ENCODE measurements at regions of chr2 and their contacts with region 1.

Region 1: DNA sequence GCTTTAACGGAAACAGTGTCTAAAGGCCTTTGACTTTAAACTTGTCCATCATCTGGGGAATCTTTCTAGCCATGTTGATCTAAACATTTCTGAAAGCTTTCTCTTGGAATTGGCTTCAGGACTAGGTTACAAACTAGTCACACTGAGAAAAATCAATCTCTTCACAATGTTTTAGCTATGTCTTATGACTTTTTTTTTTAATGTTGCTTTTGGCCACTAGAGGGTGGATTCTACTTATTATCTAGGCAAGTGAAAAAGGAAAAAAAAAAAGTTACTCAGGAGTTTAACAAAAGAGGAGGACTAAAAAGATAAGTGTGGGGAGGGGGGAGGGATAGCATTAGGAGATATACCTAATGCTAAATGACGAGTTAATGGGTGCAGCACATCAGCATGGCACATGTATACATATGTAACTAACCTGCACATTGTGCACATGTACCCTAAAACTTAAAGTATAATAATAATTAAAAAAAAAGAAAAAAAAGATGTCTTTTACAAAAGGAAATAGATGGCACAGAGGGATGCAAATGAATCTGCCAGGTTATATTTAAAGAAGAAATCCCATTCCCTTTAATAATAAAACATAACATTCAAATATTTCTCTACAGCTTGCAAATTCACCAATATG is 160.4 kb upstream of the PID1 start:
- DNase-seq: peak; percentile 78
- ATAC-seq: peak; percentile 40; the same call in 1 of the 2 replicates
- H3K4me3 ChIP-seq: no peak overlapping the region
- H3K27ac ChIP-seq: no peak overlapping the region
- H3K4me1 ChIP-seq: peaks cover 7% of the 10 kb centered on the region; the same call in 1 of the 2 replicates
- H3K27me3 ChIP-seq: no peaks in the 10 kb centered on the region
- CTCF ChIP-seq: peak; percentile 67

Region 2: DNA sequence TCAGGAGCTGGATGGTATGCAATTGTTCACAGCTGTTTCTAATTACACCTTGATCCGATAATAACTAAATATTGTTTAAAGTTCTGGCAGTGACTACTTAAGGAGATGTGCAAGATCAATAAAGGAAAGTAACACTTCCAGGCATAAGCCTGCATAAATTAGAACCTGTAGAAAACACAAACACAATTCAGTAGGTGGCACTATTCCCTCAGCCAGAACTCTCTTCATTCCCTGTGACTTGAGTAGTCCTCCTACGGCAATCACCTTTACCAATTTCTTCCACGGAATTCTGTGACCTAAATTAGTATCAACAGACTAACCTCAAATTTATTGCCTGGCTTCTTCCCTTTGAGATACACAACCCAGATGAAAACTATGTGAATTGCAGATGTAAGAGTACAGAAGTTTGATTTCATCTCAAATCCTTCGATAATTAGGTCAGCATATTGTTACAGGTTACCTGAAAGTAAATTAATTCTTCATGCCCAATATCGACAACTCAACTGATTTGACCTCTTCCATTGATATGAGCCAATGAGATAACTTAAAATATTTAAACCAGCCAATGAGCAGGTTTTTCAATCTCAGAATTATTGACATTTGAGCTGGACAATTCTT is 298.2 kb before region 1 on chr2:
- CTCF ChIA-PET with region 1: no interaction called
- POLR2A ChIA-PET with region 1: no interaction called
- intact Hi-C with region 1: loop called (anchors 1 kb)
- DNase-seq: peak; percentile 78
- ATAC-seq: peak; percentile 75
- H3K4me3 ChIP-seq: no peak overlapping the region
- H3K27ac ChIP-seq: no peak overlapping the region
- H3K4me1 ChIP-seq: no peaks in the 10 kb centered on the region
- H3K27me3 ChIP-seq: peaks cover 6% of the 10 kb centered on the region; the same call in 1 of the 2 replicates
- CTCF ChIP-seq: peak; percentile 84

Region 3: DNA sequence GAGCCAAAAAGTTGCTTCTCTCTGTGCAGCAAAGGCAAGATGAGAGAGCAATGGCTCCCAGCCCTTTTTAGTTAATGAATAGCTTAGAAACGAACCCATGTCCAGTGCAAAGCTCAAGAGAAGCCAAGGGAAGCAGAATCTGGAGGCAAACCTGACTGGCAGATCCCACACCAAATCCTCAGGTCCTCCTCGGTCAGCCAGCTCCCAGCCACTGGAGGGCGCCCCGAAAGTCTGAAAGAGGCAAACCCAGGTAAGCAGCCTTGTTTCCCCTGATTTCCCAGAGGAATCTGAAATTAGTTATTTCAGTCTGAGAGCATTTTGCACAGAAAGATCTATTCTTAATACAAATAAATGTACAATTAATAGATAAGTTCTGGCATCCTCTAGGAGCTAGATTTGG is 89.1 kb before region 1 on chr2:
- CTCF ChIA-PET with region 1: interaction called, 4 read pairs
- POLR2A ChIA-PET with region 1: no interaction called
- intact Hi-C with region 1: loop called (anchors 5 kb)
- DNase-seq: peak; percentile 65
- ATAC-seq: peak; percentile 53; the same call in 1 of the 2 replicates
- H3K4me3 ChIP-seq: no peak overlapping the region
- H3K27ac ChIP-seq: no peak overlapping the region
- H3K4me1 ChIP-seq: peaks cover 30% of the 10 kb centered on the region
- H3K27me3 ChIP-seq: no peaks in the 10 kb centered on the region
- CTCF ChIP-seq: peak; percentile 82

Region 4: GRCh38 chr2:229401171-229401851 is 30.1 kb before region 1 on chr2:
- CTCF ChIA-PET with region 1: interaction called, 10 read pairs
- POLR2A ChIA-PET with region 1: no interaction called
- intact Hi-C with region 1: no loop called
- DNase-seq: no peak
- ATAC-seq: no peak
- H3K4me3 ChIP-seq: no peak overlapping the region
- H3K27ac ChIP-seq: no peak overlapping the region
- H3K4me1 ChIP-seq: no peaks in the 10 kb centered on the region
- H3K27me3 ChIP-seq: no peaks in the 10 kb centered on the region
- CTCF ChIP-seq: no peak

Measured in PC-3 (cell line).